ENCODE measurements at regions of chr19 and their contacts with region 1.

Region 1: GRCh38 chr19:44770550-44771257 is 7.0 kb upstream of the CBLC start:
- DNase-seq: peak; percentile 99
- H3K4me3 Mint-ChIP-seq: peak overlapping the region; percentile 59
- H3K27ac Mint-ChIP-seq: peak overlapping the region; percentile 87
- H3K4me1 Mint-ChIP-seq: peaks cover 37% of the 10 kb centered on the region
- H3K27me3 Mint-ChIP-seq: peaks cover 8% of the 10 kb centered on the region

Region 2: GRCh38 chr19:44648402-44649251 is 122.1 kb before region 1 on chr19:
- CTCF ChIA-PET with region 1: no interaction called
- POLR2A ChIA-PET with region 1: no interaction called
- DNase-seq: no peak
- H3K4me3 Mint-ChIP-seq: no peak overlapping the region
- H3K27ac Mint-ChIP-seq: no peak overlapping the region
- H3K4me1 Mint-ChIP-seq: no peaks in the 10 kb centered on the region
- H3K27me3 Mint-ChIP-seq: no peaks in the 10 kb centered on the region

Region 3: DNA sequence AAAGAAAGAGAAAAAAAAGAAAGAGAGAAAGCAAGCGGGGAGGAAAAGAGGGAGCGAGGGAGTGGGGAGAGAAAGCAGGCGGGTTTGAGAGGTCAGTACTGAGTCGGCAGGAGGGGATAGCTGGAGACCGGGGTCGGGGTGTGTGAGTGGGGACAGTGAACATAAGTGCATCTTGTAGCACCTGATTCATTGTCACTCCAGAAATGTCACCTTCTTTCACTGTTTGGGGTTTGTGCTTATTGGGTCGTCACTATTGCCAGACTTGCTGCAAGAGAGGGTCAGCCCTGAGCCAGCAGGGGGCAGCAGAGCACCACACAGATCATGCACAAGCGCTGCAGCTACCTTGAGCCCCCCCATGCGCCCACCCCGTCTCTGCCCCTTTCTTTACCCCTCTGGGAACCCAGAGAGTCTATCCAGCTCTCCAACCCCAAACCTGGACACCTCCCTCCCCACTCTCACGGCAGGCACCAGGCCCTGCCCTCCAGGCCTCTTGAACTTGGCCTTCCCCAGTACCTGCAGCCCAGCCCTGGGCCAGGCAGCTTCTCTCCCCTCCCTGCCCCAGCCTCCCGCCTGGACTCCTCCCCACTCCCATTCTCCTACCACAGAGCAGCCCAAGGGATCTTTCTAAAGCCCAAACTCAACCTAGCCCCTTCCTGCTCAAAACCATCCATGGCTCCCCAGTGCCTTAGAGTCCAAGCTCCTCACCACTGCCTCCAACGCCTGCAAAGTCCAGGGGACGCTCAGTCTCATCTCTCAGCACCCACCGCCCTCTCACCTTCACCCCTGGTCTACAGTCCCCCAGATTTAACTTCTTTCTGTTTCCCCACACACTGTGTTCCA is 81.4 kb before region 1 on chr19:
- CTCF ChIA-PET with region 1: interaction called, 34 read pairs
- POLR2A ChIA-PET with region 1: no interaction called
- DNase-seq: peak; percentile 80
- H3K4me3 Mint-ChIP-seq: no peak overlapping the region
- H3K27ac Mint-ChIP-seq: peak overlapping the region; percentile 17
- H3K4me1 Mint-ChIP-seq: peaks cover 36% of the 10 kb centered on the region
- H3K27me3 Mint-ChIP-seq: peaks cover 13% of the 10 kb centered on the region

Region 4: DNA sequence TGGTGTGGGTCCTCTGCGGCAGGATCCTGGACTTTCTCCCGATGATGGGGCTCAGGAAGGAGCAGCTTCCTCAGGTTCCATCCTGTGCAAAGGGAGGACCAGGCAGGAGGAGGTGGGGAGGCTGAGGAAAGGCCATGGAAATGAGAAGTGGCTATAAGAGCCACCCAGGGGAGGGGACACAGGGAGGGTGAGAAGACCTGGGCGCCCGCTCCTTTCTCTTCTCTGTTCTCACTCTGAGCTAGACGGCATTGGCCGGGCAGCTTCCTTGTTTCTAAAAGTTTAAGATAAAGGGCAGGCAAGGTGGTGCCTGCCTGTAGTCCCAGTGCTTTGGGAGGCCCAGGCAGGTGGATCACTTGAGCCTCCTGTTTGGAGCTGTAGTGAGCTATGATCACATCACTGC is 38.1 kb before region 1 on chr19:
- CTCF ChIA-PET with region 1: interaction called, 20 read pairs
- POLR2A ChIA-PET with region 1: no interaction called
- DNase-seq: no peak
- H3K4me3 Mint-ChIP-seq: no peak overlapping the region
- H3K27ac Mint-ChIP-seq: no peak overlapping the region
- H3K4me1 Mint-ChIP-seq: peaks cover 9% of the 10 kb centered on the region
- H3K27me3 Mint-ChIP-seq: peaks cover 7% of the 10 kb centered on the region

Region 5: GRCh38 chr19:44741841-44742352 is 28.8 kb before region 1 on chr19:
- CTCF ChIA-PET with region 1: interaction called, 17 read pairs
- POLR2A ChIA-PET with region 1: no interaction called
- DNase-seq: no peak
- H3K4me3 Mint-ChIP-seq: no peak overlapping the region
- H3K27ac Mint-ChIP-seq: no peak overlapping the region
- H3K4me1 Mint-ChIP-seq: peaks cover 14% of the 10 kb centered on the region
- H3K27me3 Mint-ChIP-seq: peaks cover 4% of the 10 kb centered on the region

Region 6: GRCh38 chr19:44752816-44753618 is 17.7 kb before region 1 on chr19:
- CTCF ChIA-PET with region 1: interaction called, 18 read pairs
- POLR2A ChIA-PET with region 1: interaction called, 3 read pairs
- DNase-seq: peak; percentile 96
- H3K4me3 Mint-ChIP-seq: peak overlapping the region; percentile 91
- H3K27ac Mint-ChIP-seq: peak overlapping the region; percentile 91
- H3K4me1 Mint-ChIP-seq: peaks cover 75% of the 10 kb centered on the region
- H3K27me3 Mint-ChIP-seq: no peaks in the 10 kb centered on the region

Region 7: GRCh38 chr19:44782729-44783128 is 12.0 kb after region 1 on chr19:
- CTCF ChIA-PET with region 1: interaction called, 25 read pairs
- POLR2A ChIA-PET with region 1: no interaction called
- DNase-seq: no peak
- H3K4me3 Mint-ChIP-seq: no peak overlapping the region
- H3K27ac Mint-ChIP-seq: no peak overlapping the region
- H3K4me1 Mint-ChIP-seq: peaks cover 5% of the 10 kb centered on the region
- H3K27me3 Mint-ChIP-seq: no peaks in the 10 kb centered on the region

Region 8: DNA sequence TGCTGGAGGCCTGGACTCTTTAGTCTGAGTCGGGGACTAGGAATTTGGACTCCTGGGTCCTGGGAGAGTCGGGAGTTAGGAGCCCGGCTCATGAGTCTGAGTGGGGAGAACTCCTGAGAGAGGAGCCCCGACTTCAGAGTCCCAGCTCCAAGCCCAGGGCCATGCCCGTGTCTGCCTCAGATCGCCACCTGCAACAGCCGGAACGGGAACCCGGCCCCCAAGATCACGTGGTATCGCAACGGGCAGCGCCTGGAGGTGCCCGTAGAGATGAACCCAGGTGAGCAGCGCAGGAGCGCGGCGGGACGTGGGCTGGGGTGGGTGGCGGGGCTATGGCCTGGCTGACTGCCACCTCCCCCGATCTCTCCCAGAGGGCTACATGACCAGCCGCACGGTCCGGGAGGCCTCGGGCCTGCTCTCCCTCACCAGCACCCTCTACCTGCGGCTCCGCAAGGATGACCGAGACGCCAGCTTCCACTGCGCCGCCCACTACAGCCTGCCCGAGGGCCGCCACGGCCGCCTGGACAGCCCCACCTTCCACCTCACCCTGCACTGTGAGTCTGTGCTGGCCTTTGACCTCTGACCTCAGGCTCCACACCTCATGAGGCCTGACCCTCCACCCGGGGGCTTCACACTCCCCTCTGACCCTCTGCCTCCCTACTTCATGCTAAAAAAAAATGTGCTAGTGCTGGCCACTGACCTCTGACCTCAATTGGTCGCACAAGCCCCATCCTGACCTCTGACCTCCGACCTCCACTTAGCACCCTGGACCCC is 42.6 kb after region 1 on chr19:
- CTCF ChIA-PET with region 1: no interaction called
- POLR2A ChIA-PET with region 1: no interaction called
- DNase-seq: no peak
- H3K4me3 Mint-ChIP-seq: no peak overlapping the region
- H3K27ac Mint-ChIP-seq: no peak overlapping the region
- H3K4me1 Mint-ChIP-seq: no peaks in the 10 kb centered on the region
- H3K27me3 Mint-ChIP-seq: peaks cover 8% of the 10 kb centered on the region